ENCODE measurements at regions of chr11 and their contacts with region 1.

Region 1: GRCh38 chr11:9460322-9461067 is at the start of gene ZNF143:
- DNase-seq: peak; percentile 100
- ATAC-seq: peak; percentile 82
- H3K4me3 ChIP-seq: peak within 1 kb of the TSS; percentile 87 to 98 (median 93)
- H3K4me3 Mint-ChIP-seq: peak within 1 kb of the TSS; percentile 97
- H3K27ac ChIP-seq: peak within 1 kb of the TSS; percentile 95 to 99
- H3K27ac Mint-ChIP-seq: peak within 1 kb of the TSS; percentile 98
- H3K4me1 ChIP-seq: peaks cover 19 to 26% of the 10 kb centered on the region in 2 donors
- H3K4me1 Mint-ChIP-seq: peaks cover 26% of the 10 kb centered on the region
- H3K27me3 ChIP-seq: no peaks in the 10 kb centered on the region
- H3K27me3 Mint-ChIP-seq: no peaks in the 10 kb centered on the region
- CTCF ChIP-seq: no peak
- total RNA-seq, gene ZNF143: 54.9 and 56.5 TPM in 2 replicates

Region 2: GRCh38 chr11:9265211-9266131 is 195.0 kb before region 1 on chr11 and contains the start of gene DENND5A:
- CTCF ChIA-PET with region 1: no interaction called
- POLR2A ChIA-PET with region 1: interaction called, 4 read pairs
- intact Hi-C with region 1: loop called (anchors 1 kb)
- DNase-seq: peak; percentile 73
- ATAC-seq: peak; percentile 74
- H3K4me3 ChIP-seq: peak within 1 kb of the TSS; percentile 64 to 94 (median 91)
- H3K4me3 Mint-ChIP-seq: peak within 1 kb of the TSS; percentile 97
- H3K27ac ChIP-seq: peak within 1 kb of the TSS; percentile 62 to 84
- H3K27ac Mint-ChIP-seq: peak within 1 kb of the TSS; percentile 94
- H3K4me1 ChIP-seq: peaks cover 11 to 19% of the 10 kb centered on the region in 2 donors
- H3K4me1 Mint-ChIP-seq: peaks cover 34% of the 10 kb centered on the region
- H3K27me3 ChIP-seq: no peaks in the 10 kb centered on the region
- H3K27me3 Mint-ChIP-seq: no peaks in the 10 kb centered on the region
- CTCF ChIP-seq: no peak
- total RNA-seq, gene DENND5A: 41.3 and 41.6 TPM in 2 replicates

Region 3: GRCh38 chr11:9384535-9385303 is 75.8 kb before region 1 on chr11 and contains the start of gene IPO7:
- CTCF ChIA-PET with region 1: interaction called, 3 read pairs
- POLR2A ChIA-PET with region 1: interaction called, 8 read pairs
- intact Hi-C with region 1: loop called (anchors 1 kb)
- DNase-seq: peak; percentile 90
- ATAC-seq: peak; percentile 97
- H3K4me3 ChIP-seq: peak within 1 kb of the TSS; percentile 36 to 93 (median 90)
- H3K4me3 Mint-ChIP-seq: peak within 1 kb of the TSS; percentile 96
- H3K27ac ChIP-seq: peak within 1 kb of the TSS; percentile 78 to 90
- H3K27ac Mint-ChIP-seq: peak within 1 kb of the TSS; percentile 95
- H3K4me1 ChIP-seq: peaks cover 15 to 22% of the 10 kb centered on the region in 2 donors
- H3K4me1 Mint-ChIP-seq: peaks cover 26% of the 10 kb centered on the region
- H3K27me3 ChIP-seq: no peaks in the 10 kb centered on the region
- H3K27me3 Mint-ChIP-seq: no peaks in the 10 kb centered on the region
- CTCF ChIP-seq: no peak
- total RNA-seq, gene IPO7: 53.2 and 77.9 TPM in 2 replicates

Region 4: DNA sequence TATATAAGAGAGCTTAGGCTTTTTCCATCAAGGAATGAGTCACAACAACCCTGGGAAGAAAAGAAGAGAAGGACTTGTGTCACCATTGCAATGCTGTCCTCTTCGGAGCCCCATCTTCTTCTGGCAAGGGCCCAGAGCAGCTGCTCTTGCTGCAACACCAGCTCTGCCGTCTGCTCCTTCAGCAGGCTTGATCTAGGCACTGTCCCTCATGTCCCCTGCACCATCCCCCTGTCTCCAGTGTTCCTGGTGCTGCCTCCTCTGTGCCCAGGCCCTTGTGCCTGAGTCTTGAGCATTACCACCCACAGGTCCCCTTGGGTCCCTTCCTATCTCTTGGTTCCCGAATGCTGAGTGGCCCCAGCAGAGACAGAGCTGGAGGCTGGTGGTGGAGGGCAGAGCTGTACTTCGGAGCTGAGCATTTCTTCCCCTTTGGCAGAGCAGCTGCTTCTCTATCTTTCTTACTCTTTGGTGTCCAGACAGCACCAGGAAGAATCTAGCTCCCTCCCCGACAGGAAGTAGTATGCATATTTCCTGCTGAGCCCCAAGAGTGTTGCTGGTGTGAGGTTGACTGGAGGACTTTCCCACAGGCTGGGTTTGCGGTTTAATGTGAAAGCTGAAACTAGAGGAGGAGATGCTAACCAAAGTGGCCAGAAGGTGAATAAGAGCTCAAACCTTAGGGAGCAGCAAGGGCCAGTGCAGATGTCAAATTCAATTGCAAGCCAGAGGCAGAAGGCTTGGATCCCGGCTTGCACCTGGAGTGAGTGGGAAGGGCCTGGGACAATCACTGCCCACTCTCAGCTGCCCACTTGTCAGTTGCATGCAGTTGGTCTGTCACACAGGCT is 140.8 kb after region 1 on chr11:
- CTCF ChIA-PET with region 1: no interaction called
- POLR2A ChIA-PET with region 1: no interaction called
- intact Hi-C with region 1: loop called (anchors 2 kb)
- DNase-seq: peak; percentile 89
- ATAC-seq: peak; percentile 80
- H3K4me3 ChIP-seq: peak overlapping the region; percentile 26 to 52 (median 44)
- H3K4me3 Mint-ChIP-seq: peak overlapping the region; percentile 79
- H3K27ac ChIP-seq: peak overlapping the region; percentile 82 to 85
- H3K27ac Mint-ChIP-seq: peak overlapping the region; percentile 87
- H3K4me1 ChIP-seq: peaks cover 36 to 45% of the 10 kb centered on the region in 2 donors
- H3K4me1 Mint-ChIP-seq: peaks cover 51% of the 10 kb centered on the region
- H3K27me3 ChIP-seq: no peaks in the 10 kb centered on the region
- H3K27me3 Mint-ChIP-seq: no peaks in the 10 kb centered on the region
- CTCF ChIP-seq: no peak

Region 5: DNA sequence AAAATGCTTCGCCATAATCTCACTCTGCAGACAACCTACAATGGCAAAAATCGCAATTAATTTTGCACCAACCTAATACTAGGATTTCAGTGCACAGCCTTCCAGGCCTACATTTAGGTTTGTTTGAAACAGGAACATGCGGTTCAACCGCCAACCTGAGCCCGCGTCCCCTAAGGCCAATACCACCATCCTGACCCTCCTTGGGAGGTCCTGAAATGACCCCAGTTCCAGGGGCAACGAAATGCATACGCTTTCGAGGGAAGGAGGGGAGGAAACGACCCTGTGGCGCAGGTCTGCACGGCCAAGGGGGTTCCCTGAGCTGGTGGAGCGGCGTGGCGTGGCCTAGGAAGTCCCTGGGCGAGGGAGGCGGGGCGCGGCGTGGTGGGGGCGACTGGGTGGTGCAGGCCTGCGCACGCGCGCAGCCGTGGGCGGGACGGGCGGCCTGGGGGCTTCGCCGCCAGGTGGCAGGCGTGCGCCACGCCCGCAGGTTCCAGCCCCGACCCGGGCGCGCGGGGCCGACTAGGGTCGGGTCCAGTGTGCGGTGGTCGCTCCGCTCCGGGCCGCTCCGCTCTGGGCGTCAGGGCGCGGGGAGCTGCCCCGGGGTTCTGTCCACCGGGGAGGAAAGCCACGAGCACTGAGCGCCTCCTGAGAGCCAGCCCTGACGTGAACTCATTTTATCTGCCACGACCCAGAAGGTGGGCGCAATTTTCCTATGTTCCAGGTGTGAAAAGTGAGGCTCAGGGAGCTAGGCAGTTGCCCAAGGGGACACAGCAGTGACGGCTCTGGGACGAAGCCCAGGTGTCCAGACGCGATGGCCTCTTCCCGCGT is 297.5 kb after region 1 on chr11:
- CTCF ChIA-PET with region 1: no interaction called
- POLR2A ChIA-PET with region 1: interaction called, 10 read pairs
- intact Hi-C with region 1: loop called (anchors 1 kb)
- DNase-seq: peak; percentile 96
- ATAC-seq: peak; percentile 59
- H3K4me3 ChIP-seq: peak overlapping the region; percentile 76 to 94 (median 79)
- H3K4me3 Mint-ChIP-seq: peak overlapping the region; percentile 91
- H3K27ac ChIP-seq: peak overlapping the region; percentile 88 to 89
- H3K27ac Mint-ChIP-seq: peak overlapping the region; percentile 97
- H3K4me1 ChIP-seq: peaks cover 55 to 60% of the 10 kb centered on the region in 2 donors
- H3K4me1 Mint-ChIP-seq: peaks cover 79% of the 10 kb centered on the region
- H3K27me3 ChIP-seq: no peaks in the 10 kb centered on the region
- H3K27me3 Mint-ChIP-seq: no peaks in the 10 kb centered on the region
- CTCF ChIP-seq: peak; percentile 85

Region 6: GRCh38 chr11:9838229-9838628 is 377.7 kb after region 1 on chr11:
- CTCF ChIA-PET with region 1: no interaction called
- POLR2A ChIA-PET with region 1: no interaction called
- intact Hi-C with region 1: no loop called
- DNase-seq: no peak
- ATAC-seq: no peak
- H3K4me3 ChIP-seq: no peak overlapping the region
- H3K4me3 Mint-ChIP-seq: no peak overlapping the region
- H3K27ac ChIP-seq: no peak overlapping the region
- H3K27ac Mint-ChIP-seq: no peak overlapping the region
- H3K4me1 ChIP-seq: peaks cover 0 to 6% of the 10 kb centered on the region in 2 donors
- H3K4me1 Mint-ChIP-seq: peaks cover 14% of the 10 kb centered on the region
- H3K27me3 ChIP-seq: no peaks in the 10 kb centered on the region
- H3K27me3 Mint-ChIP-seq: no peaks in the 10 kb centered on the region
- CTCF ChIP-seq: no peak

Region 7: DNA sequence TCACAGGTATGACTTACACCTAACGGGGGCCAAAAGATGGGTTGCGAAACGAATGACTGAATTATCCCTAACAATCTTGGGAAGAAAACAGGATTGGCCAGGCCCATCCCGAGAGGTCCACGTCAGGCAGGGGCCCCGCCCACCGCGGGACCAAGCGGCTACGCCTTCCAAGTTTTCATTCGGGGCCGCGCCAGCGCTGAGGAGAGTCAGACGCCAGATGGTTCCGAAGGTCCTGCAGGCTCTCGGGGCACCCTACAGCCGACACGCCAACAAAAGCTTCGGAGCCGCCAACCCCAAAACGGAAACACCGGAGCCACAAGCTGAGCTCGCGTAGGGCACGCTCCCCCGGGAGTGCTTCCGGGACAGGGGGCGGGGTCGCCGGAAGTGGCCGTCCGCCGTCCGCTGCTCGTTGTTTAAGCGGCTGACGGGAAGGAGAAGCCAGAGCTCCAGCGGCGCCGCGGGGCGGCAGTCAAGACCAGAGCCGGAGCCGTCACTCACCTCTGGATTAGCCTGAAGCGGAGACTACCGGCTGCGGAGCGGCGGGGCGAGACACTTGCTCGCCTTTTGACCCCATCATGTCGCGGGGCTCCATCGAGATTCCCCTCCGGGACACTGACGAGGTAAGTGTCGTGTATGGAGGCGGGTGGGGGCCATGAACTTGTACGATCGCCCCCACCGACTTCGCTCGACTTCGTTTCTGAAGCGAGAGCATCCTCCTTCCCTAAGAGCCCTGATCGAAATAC is 1290.5 kb after region 1 on chr11 and contains the start of gene CTR9:
- CTCF ChIA-PET with region 1: no interaction called
- POLR2A ChIA-PET with region 1: no interaction called
- intact Hi-C with region 1: loop called (anchors 2 kb)
- DNase-seq: peak; percentile 95
- ATAC-seq: peak; percentile 92
- H3K4me3 ChIP-seq: peak within 1 kb of the TSS; percentile 77 to 96 (median 92)
- H3K4me3 Mint-ChIP-seq: peak within 1 kb of the TSS; percentile 95
- H3K27ac ChIP-seq: peak within 1 kb of the TSS; percentile 78 to 85
- H3K27ac Mint-ChIP-seq: peak within 1 kb of the TSS; percentile 91
- H3K4me1 ChIP-seq: peaks cover 8 to 12% of the 10 kb centered on the region in 2 donors
- H3K4me1 Mint-ChIP-seq: peaks cover 21% of the 10 kb centered on the region
- H3K27me3 ChIP-seq: no peaks in the 10 kb centered on the region
- H3K27me3 Mint-ChIP-seq: no peaks in the 10 kb centered on the region
- CTCF ChIP-seq: no peak
- total RNA-seq, gene CTR9: 46.7 and 52.0 TPM in 2 replicates